ENCODE measurements at regions of chr1 and their contacts with region 1.

Region 1: DNA sequence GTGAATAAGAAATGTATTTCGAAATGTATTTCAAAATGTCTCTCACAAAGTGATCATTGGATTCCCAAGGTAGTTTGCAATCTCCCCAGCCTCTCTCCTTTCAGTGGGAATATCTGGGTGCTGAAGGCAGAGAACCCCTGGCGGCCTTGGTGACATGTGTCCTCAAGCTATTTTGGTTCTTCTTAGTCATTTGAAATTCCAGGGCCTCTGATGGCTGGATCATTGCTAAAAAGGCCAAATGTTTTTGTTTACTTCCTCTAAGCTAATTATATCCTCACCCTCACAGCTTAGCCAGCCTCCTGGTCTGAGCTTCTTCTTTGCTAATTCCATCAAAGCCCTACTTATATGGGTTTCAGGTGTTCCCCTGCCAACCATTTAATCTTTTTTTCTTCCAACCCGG is 71.2 kb downstream of the LRRC40 start:
- DNase-seq: no peak
- ATAC-seq: no peak
- H3K4me3 ChIP-seq: no peak overlapping the region
- H3K4me3 Mint-ChIP-seq: no peak overlapping the region
- H3K27ac ChIP-seq: no peak overlapping the region
- H3K27ac Mint-ChIP-seq: no peak overlapping the region
- H3K4me1 ChIP-seq: no peaks in the 10 kb centered on the region
- H3K4me1 Mint-ChIP-seq: no peaks in the 10 kb centered on the region
- H3K27me3 ChIP-seq: peaks cover 0 to 3% (median 0%) of the 10 kb centered on the region in 4 experiments
- H3K27me3 Mint-ChIP-seq: peaks cover 8% of the 10 kb centered on the region
- CTCF ChIP-seq: no peak

Region 2: GRCh38 chr1:70195342-70195741 is 61.2 kb after region 1 on chr1:
- CTCF ChIA-PET with region 1: no interaction called
- POLR2A ChIA-PET with region 1: no interaction called
- intact Hi-C with region 1: no loop called
- DNase-seq: no peak
- ATAC-seq: no peak
- H3K4me3 ChIP-seq: no peak overlapping the region
- H3K4me3 Mint-ChIP-seq: no peak overlapping the region
- H3K27ac ChIP-seq: no peak overlapping the region
- H3K27ac Mint-ChIP-seq: no peak overlapping the region
- H3K4me1 ChIP-seq: no peaks in the 10 kb centered on the region
- H3K4me1 Mint-ChIP-seq: peaks cover 9% of the 10 kb centered on the region
- H3K27me3 ChIP-seq: no peaks in the 10 kb centered on the region
- H3K27me3 Mint-ChIP-seq: no peaks in the 10 kb centered on the region
- CTCF ChIP-seq: no peak

Region 3: DNA sequence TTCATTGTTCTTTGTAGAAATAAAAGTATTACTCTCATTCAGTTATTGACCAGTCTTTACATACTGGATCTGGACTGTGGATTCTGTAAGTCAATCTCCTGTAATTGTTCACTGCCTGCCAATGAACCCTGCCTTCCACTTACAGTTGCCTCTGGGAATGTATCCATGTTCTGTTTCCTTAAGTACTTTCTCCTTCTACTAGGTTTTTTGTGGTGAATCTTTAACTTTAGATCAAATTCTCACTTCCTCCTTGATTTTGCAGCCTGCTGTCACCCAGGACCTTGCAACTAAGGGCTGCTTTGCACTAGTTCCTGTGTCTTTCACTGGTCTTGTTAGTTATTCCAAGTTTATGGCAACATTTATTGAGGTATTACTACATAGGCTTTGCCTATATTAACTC is 248.5 kb after region 1 on chr1:
- CTCF ChIA-PET with region 1: no interaction called
- POLR2A ChIA-PET with region 1: no interaction called
- intact Hi-C with region 1: no loop called
- DNase-seq: no peak
- ATAC-seq: no peak
- H3K4me3 ChIP-seq: no peak overlapping the region
- H3K4me3 Mint-ChIP-seq: no peak overlapping the region
- H3K27ac ChIP-seq: no peak overlapping the region
- H3K27ac Mint-ChIP-seq: no peak overlapping the region
- H3K4me1 ChIP-seq: no peaks in the 10 kb centered on the region
- H3K4me1 Mint-ChIP-seq: no peaks in the 10 kb centered on the region
- H3K27me3 ChIP-seq: no peaks in the 10 kb centered on the region
- H3K27me3 Mint-ChIP-seq: peaks cover 8% of the 10 kb centered on the region
- CTCF ChIP-seq: no peak

Region 4: DNA sequence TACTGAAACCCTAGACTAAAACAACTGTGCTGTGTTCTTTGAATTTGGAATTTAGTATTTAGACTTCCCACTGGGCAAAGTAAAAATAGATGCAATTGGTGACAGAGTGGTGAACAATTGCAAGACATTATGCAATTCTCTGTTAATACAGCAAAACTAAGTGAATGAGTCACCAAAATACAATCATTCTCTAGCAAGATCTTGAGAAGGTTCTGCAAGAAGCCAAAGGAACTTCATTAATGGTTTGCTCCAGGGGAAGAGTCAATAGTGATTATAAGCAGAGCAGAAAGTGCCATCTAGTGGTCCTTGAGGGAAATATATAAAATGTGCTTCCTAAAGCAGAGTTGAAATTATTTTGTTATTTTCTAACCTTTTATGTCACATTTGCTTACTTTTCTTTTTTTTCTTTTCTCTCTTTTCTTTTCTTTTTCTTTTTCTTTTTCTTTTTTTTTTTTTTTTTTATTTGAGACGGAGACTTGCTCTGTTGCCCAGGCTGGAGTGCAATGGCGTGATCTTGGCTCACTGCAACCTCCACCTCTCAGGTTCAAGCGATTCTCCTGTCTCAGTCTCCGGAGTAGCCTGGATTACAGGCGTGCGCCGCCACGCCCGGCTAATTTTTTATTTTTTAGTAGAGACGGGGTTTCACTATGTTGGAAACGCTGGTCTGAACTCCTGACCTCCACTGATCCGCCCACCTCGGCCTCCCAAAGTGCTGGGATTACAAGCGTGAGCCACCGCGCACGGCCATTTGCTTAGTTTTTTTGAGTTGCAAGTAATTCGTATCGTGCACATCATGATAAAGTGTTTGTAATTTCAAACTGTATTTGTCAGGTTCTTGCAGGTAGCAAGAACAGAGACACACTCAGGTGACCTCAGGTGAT is 376.1 kb after region 1 on chr1:
- CTCF ChIA-PET with region 1: interaction called, 14 read pairs
- POLR2A ChIA-PET with region 1: no interaction called
- intact Hi-C with region 1: no loop called
- DNase-seq: peak; percentile 57
- ATAC-seq: peak; percentile 31
- H3K4me3 ChIP-seq: no peak overlapping the region
- H3K4me3 Mint-ChIP-seq: no peak overlapping the region
- H3K27ac ChIP-seq: no peak overlapping the region
- H3K27ac Mint-ChIP-seq: no peak overlapping the region
- H3K4me1 ChIP-seq: no peaks in the 10 kb centered on the region
- H3K4me1 Mint-ChIP-seq: no peaks in the 10 kb centered on the region
- H3K27me3 ChIP-seq: no peaks in the 10 kb centered on the region
- H3K27me3 Mint-ChIP-seq: peaks cover 19% of the 10 kb centered on the region
- CTCF ChIP-seq: peak; percentile 83

Region 5: DNA sequence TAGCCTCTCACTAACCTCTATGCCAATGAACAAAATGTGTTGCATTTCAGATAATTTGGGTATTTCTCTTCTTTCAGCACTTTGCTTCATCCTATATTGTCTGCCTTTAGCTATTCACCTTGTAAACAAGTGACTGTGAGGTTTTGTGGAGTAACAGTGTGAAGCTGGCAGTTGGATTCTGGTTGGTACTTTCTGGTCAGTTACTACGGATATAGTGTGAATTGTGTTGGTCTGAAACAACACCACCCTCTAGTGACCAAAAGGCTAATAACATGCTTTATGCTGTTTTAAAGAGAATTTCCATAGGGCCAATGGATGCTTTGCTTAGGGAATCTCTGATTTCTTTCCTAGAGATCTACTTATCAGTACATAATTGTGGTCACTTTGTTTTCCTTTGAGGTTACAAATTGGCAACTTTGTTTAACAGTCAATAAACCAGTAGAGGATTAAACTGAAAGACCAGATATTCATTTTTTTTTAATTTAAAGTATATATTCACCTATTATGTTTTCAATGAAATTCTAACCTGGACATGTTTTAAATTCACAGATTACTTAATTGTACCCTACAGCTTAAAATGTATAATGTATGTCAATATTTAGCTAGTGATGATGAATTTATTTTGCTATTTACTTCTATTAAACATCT is 915.9 kb after region 1 on chr1:
- CTCF ChIA-PET with region 1: no interaction called
- POLR2A ChIA-PET with region 1: no interaction called
- intact Hi-C with region 1: loop called (anchors 1 kb)
- DNase-seq: peak; percentile 69
- ATAC-seq: peak; percentile 48
- H3K4me3 ChIP-seq: no peak overlapping the region
- H3K4me3 Mint-ChIP-seq: no peak overlapping the region
- H3K27ac ChIP-seq: no peak overlapping the region
- H3K27ac Mint-ChIP-seq: no peak overlapping the region
- H3K4me1 ChIP-seq: peaks cover 17 to 21% of the 10 kb centered on the region in 2 donors
- H3K4me1 Mint-ChIP-seq: peaks cover 17% of the 10 kb centered on the region
- H3K27me3 ChIP-seq: peaks cover 0 to 35% (median 27%) of the 10 kb centered on the region in 4 experiments
- H3K27me3 Mint-ChIP-seq: peaks cover 42% of the 10 kb centered on the region
- CTCF ChIP-seq: peak; percentile 83